Left cardiac atrium (tissue), 4 donors: ENCODE measurements at regions of chr1 and their contacts with region 1.

Region 1: GRCh38 chr1:75265792-75266191 is 131.6 kb downstream of the LHX8 start:
- DNase-seq: no peak
- ATAC-seq: no peak

Region 2: GRCh38 chr1:75338616-75339483 is 73.1 kb after region 1 on chr1:
- intact Hi-C with region 1: no loop called
- DNase-seq: no peak
- ATAC-seq: no peak

Region 3: GRCh38 chr1:75632350-75632949 is 366.7 kb after region 1 on chr1:
- intact Hi-C with region 1: loop called (anchors 2 to 5 kb)
- DNase-seq: no peak
- ATAC-seq: peak; percentile 38 to 59